ENCODE measurements at regions of chr1 and their contacts with region 1.

Region 1: DNA sequence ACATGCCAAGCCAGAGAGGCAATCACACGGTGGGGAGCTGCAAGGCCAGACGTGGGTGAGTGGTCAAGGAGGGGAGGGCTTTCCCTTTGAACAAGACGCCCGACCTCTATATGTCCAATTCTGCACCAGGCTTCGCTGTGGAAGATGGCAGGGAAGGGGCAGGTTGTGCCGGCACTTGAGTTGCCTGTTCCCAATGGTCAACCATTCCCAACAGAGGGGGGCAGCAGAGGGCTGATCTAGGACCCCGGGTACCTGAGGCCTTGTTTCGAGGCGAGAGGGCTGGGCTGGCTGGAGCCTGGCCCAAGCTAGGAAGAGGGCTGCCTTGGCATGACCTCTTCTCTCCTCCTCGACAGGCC is 64.9 kb downstream of the TMEM53 start:
- DNase-seq: peak; percentile 23 to 57
- ATAC-seq: peak; percentile 62 to 91
- H3K4me3 ChIP-seq: no peak overlapping the region
- H3K27ac ChIP-seq: no peak overlapping the region
- H3K4me1 ChIP-seq: no peaks in the 10 kb centered on the region
- H3K27me3 ChIP-seq: no peaks in the 10 kb centered on the region
- CTCF ChIP-seq: peak; percentile 62 to 87 (median 79)
- POLR2A ChIP-seq: no peak

Region 2: GRCh38 chr1:44423591-44424537 is 185.5 kb before region 1 on chr1:
- in situ Hi-C with region 1: no loop called
- intact Hi-C with region 1: no loop called
- DNase-seq: peak; percentile 23 to 36
- ATAC-seq: peak; percentile 78 to 86
- H3K4me3 ChIP-seq: peak overlapping the region in 1 of 4 donors; percentile 13
- H3K27ac ChIP-seq: peak overlapping the region in 3 of 4 donors; percentile 29 to 34 (median 30)
- H3K4me1 ChIP-seq: peaks cover 14 to 20% of the 10 kb centered on the region in 2 donors
- H3K27me3 ChIP-seq: peaks cover 30 to 49% (median 32%) of the 10 kb centered on the region in 3 donors
- CTCF ChIP-seq: no peak
- POLR2A ChIP-seq: no peak

Region 3: DNA sequence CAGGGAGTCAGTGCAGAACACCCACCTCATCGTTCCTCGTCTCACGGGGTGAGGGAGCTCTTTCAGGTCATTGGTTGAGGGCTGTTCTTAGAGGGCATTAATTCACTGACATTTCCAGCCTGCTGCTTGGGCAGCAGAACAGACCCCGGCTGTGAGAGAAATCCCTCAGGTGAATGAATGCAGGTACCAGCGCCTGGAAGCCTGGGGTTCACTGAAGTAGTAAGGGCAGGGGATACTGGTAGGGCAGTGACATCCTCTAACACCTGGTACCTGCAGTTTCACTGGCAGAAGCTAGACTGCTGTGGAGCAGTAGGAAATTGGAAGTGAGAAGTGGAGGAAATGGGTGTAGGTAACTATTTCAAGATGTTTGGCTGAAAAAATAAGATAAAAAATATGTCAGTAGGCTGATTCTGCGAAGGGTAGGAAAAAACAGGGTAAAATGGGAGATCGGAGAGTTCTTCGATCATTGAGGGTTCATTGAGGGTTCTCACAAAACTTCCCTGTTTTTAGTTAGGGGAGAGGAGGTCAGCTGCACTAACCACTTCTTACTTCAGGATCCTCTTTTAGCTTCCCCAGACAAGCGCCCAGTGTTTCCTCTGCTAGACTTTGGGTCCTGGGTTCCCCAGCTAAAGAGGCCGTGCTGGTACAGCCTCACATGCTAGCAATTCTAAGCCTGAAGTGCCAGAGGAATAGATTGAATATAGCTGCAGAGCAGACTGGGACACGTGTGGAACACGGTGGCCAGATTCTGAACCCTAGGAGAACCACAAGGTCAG is 149.1 kb before region 1 on chr1:
- in situ Hi-C with region 1: no loop called
- intact Hi-C with region 1: no loop called
- DNase-seq: no peak
- ATAC-seq: no peak
- H3K4me3 ChIP-seq: no peak overlapping the region
- H3K27ac ChIP-seq: no peak overlapping the region
- H3K4me1 ChIP-seq: no peaks in the 10 kb centered on the region
- H3K27me3 ChIP-seq: peaks cover 0 to 14% (median 0%) of the 10 kb centered on the region in 3 donors
- CTCF ChIP-seq: no peak
- POLR2A ChIP-seq: no peak

Region 4: GRCh38 chr1:44652445-44653106 is 43.2 kb after region 1 on chr1:
- in situ Hi-C with region 1: loop called (anchors 5 to 10 kb)
- intact Hi-C with region 1: loop called (anchors 1 kb)
- DNase-seq: peak; percentile 43 to 72
- ATAC-seq: peak; percentile 79 to 88
- H3K4me3 ChIP-seq: no peak overlapping the region
- H3K27ac ChIP-seq: no peak overlapping the region
- H3K4me1 ChIP-seq: peaks cover 0 to 18% of the 10 kb centered on the region in 2 donors
- H3K27me3 ChIP-seq: no peaks in the 10 kb centered on the region
- CTCF ChIP-seq: peak; percentile 91 to 97 (median 96)
- POLR2A ChIP-seq: no peak

Region 5: DNA sequence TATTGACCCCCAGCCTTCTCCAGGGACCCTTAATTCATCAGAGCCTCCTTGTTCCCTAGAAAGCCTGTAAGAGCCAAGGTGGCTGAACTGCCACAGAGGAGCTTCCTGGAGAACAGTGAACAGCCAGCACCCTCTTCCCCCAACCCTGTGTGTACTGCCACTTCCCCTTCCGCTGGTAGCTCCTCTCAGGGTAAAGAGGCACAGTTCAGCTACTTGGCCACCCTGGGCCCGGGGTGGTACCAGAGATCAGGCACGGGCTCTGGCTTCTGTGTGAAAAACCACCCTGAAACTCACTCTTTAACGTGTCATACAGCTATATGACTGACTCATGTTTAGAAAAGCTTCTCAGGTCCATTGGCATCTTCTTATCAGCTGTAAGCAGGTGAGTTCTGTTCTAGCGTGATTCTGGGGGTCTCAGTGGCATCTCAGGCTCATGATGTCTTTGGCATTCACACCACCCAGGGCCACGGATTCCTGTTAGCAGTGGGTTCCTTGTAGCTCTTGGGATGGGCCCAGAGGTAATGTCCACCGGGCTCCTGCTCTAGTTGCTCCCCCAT is 87.5 kb after region 1 on chr1:
- in situ Hi-C with region 1: no loop called
- intact Hi-C with region 1: no loop called
- DNase-seq: no peak
- ATAC-seq: no peak
- H3K4me3 ChIP-seq: no peak overlapping the region
- H3K27ac ChIP-seq: no peak overlapping the region
- H3K4me1 ChIP-seq: no peaks in the 10 kb centered on the region
- H3K27me3 ChIP-seq: no peaks in the 10 kb centered on the region
- CTCF ChIP-seq: no peak
- POLR2A ChIP-seq: no peak